PC-9 (cell line): ENCODE measurements at regions of chr11 and their contacts with region 1.

Region 1: DNA sequence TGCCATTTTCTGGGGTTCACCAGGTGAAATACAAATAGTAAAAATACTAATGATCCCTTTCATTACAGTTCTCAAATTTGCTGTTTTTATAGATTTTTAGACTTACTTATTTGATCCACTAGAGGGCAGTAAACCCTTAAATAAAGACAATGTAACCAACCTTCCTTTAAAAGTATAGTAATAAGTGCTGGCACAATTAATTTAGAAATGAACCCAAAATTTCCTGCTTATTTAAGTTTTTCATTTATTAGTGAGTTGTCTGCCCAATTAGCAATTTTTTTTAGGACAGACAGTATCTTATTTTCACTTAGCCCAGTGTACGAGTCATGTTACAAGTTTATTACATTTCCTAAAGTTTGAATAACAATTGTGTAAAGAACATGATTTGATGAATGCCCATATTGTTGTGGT is 4.7 kb downstream of the DDIAS start:
- DNase-seq: peak in 1 of 2 experiments; percentile 50
- H3K4me3 ChIP-seq: no peak overlapping the region
- H3K27ac ChIP-seq: no peak overlapping the region
- H3K4me1 ChIP-seq: peaks cover 9% of the 10 kb centered on the region
- H3K27me3 ChIP-seq: no peaks in the 10 kb centered on the region
- CTCF ChIP-seq: peak; percentile 91

Region 2: GRCh38 chr11:82790723-82791484 is 115.3 kb before region 1 on chr11:
- CTCF ChIA-PET with region 1: interaction called, 11 read pairs
- POLR2A ChIA-PET with region 1: no interaction called
- intact Hi-C with region 1: no loop called
- DNase-seq: no peak
- H3K4me3 ChIP-seq: no peak overlapping the region
- H3K27ac ChIP-seq: no peak overlapping the region
- H3K4me1 ChIP-seq: no peaks in the 10 kb centered on the region
- H3K27me3 ChIP-seq: no peaks in the 10 kb centered on the region
- CTCF ChIP-seq: no peak

Region 3: DNA sequence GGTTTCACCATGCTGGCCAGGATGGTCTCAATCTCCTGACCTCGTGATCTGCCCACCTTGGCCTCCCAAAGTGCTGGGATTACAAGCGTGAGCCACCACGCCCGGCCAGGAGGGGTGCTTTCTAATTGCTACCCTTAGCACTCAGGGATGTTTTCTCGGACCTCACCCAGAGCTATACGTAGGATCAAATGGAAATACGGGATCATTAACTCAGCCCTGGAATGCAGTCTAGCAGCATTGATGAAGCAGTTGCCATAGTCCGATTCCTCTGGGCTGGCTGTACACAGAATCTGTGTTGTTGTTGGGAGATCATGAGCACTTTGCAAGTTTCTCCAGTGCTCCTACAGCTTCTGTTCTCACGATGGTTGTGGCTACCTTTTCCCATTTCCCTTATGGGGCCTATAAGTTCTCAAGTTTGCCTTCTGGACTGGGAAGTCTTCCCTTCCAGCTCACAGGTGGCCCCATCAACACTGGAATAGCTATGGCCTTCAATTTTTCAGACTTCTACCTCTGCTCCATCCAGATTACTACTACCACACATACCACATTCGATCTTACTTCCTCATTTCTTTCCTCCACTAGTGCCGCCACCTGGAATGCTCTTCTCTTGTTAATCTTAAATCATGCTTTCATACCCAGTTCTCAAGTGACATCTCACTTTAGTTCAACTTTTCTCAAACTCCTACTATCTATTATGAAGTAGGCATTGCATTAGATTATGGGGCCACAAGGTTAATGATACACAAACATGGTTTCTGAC is 234.6 kb after region 1 on chr11:
- CTCF ChIA-PET with region 1: no interaction called
- POLR2A ChIA-PET with region 1: no interaction called
- intact Hi-C with region 1: no loop called
- DNase-seq: no peak
- H3K4me3 ChIP-seq: no peak overlapping the region
- H3K27ac ChIP-seq: no peak overlapping the region
- H3K4me1 ChIP-seq: no peaks in the 10 kb centered on the region
- H3K27me3 ChIP-seq: no peaks in the 10 kb centered on the region
- CTCF ChIP-seq: no peak

Region 4: DNA sequence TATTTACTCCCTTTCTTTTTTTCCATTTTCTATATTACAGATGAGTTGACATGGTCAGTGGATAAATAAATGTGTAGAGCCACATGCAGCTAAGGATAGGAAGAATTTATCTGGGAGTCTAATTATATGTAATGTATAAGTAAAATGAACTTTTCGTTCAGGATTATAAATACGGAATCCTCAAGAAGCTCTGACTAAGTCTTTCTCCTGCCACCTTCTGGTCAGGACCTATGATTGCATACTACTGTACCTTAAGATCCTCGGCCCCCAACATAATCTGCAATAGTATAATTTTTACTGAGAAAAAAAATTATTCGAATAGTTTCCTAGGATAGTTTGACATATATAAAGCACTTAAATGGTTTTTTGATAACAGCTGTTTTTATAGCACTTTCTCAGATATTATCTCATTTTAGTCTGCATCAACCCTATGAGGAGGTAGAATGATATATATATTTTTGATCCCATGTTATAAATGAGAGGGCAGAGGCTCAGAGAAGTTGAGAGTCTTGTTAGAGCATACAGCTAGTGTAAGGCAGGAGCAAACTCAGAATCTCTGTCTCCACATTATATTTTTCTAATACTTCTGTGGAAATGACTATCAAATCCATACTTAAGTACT is 343.8 kb after region 1 on chr11:
- CTCF ChIA-PET with region 1: interaction called, 5 read pairs
- POLR2A ChIA-PET with region 1: no interaction called
- intact Hi-C with region 1: loop called (anchors 1 kb)
- DNase-seq: peak in 1 of 2 experiments; percentile 59
- H3K4me3 ChIP-seq: no peak overlapping the region
- H3K27ac ChIP-seq: no peak overlapping the region
- H3K4me1 ChIP-seq: peaks cover 1% of the 10 kb centered on the region
- H3K27me3 ChIP-seq: no peaks in the 10 kb centered on the region
- CTCF ChIP-seq: peak; percentile 83